ENCODE measurements at regions of chr1 and their contacts with region 1.

Region 1: GRCh38 chr1:66764994-66765578 is 12.8 kb downstream of the DYNLT5 start:
- DNase-seq: peak in 1 of 2 experiments; percentile 34
- H3K4me3 ChIP-seq: no peak overlapping the region
- H3K27ac ChIP-seq: no peak overlapping the region
- H3K4me1 ChIP-seq: no peaks in the 10 kb centered on the region
- H3K27me3 ChIP-seq: no peaks in the 10 kb centered on the region
- CTCF ChIP-seq: peak; percentile 86

Region 2: DNA sequence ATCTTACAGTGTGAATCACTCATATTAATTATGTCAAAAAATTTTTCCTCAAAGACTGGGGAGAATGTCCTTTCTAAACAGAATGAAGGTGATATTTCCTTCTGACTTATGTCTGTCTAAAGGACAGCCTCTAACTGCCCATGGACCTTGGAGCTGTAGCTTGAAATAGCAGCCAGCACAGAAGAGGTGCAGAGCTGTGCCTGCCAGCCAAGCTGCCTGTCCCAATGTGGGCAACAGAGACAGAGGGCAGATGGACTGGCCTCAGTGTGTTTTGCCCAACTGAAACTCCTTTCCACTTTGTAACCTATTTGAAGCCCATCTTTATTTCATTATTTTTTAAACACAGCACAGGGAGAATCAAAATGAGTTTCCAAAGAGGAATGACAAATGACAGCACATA is 110.4 kb before region 1 on chr1:
- CTCF ChIA-PET with region 1: no interaction called
- POLR2A ChIA-PET with region 1: no interaction called
- intact Hi-C with region 1: no loop called
- DNase-seq: no peak
- H3K4me3 ChIP-seq: no peak overlapping the region
- H3K27ac ChIP-seq: no peak overlapping the region
- H3K4me1 ChIP-seq: no peaks in the 10 kb centered on the region
- H3K27me3 ChIP-seq: no peaks in the 10 kb centered on the region
- CTCF ChIP-seq: no peak

Region 3: DNA sequence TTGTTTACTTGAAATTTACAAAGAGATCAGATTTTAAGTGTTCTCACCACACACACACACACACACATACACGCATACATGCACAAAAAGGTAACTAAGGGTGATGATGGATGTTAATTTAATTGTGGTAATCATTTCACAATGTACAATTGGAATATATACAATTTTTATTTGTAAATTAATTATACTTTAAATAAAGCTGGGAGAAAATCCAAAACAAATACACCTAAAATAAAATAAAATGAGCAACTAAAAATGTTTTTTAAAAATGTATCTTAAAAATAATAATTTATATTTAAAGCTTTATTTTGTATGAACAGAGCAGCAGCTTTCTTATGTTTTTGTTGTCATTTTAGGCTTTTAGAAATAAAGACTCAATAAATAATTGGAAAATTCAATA is 44.2 kb after region 1 on chr1:
- CTCF ChIA-PET with region 1: no interaction called
- POLR2A ChIA-PET with region 1: no interaction called
- intact Hi-C with region 1: no loop called
- DNase-seq: no peak
- H3K4me3 ChIP-seq: no peak overlapping the region
- H3K27ac ChIP-seq: no peak overlapping the region
- H3K4me1 ChIP-seq: no peaks in the 10 kb centered on the region
- H3K27me3 ChIP-seq: no peaks in the 10 kb centered on the region
- CTCF ChIP-seq: no peak

Region 4: DNA sequence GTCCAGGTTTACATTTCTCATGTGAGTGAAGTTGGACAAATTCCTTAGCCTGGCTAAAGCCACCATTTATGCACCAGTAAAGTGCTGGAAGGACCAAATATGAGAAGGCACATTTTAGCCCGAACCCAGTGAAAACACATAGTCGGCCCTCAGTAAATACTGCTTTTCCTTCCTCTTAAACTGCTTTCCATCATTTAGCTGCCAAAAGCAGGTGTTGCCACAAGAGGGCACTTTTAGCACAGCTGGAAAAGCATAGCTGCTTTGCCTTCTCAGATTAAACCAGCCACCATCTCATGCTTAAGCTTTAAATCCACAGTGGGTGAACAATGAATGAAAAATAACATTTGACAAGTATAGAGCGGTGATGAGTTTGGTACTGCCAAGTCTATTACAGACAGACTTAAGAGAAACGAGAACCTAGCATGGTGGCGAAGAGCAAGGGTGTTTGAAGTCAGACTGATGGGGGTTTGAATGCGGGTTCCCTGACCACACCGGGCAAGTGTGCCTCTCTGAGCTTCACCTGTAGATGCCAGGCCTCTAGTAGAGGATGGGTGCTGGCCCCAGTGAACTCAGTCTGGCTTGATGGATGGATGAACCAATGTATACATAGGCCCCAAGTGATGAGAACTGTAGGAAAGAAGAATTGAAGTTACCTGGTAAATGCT is 231.1 kb after region 1 on chr1:
- CTCF ChIA-PET with region 1: no interaction called
- POLR2A ChIA-PET with region 1: no interaction called
- intact Hi-C with region 1: loop called (anchors 10 kb)
- DNase-seq: peak; percentile 49 to 53
- H3K4me3 ChIP-seq: no peak overlapping the region
- H3K27ac ChIP-seq: no peak overlapping the region
- H3K4me1 ChIP-seq: no peaks in the 10 kb centered on the region
- H3K27me3 ChIP-seq: no peaks in the 10 kb centered on the region
- CTCF ChIP-seq: peak; percentile 83

Measured in PC-9 (cell line).